B cell (primary cell): ENCODE measurements at regions of chr13 and their contacts with region 1.

Region 1: GRCh38 chr13:40629678-40630384 is 36.6 kb downstream of the FOXO1 start:
- DNase-seq: peak; percentile 68
- ATAC-seq: peak; percentile 73
- H3K4me3 ChIP-seq: peak overlapping the region in 2 of 5 experiments; percentile 6 to 37
- H3K4me3 Mint-ChIP-seq: peak overlapping the region; percentile 66
- H3K27ac ChIP-seq: peak overlapping the region; percentile 74 to 80
- H3K27ac Mint-ChIP-seq: peak overlapping the region; percentile 80
- H3K4me1 ChIP-seq: peaks cover 69 to 76% of the 10 kb centered on the region in 2 donors
- H3K4me1 Mint-ChIP-seq: peaks cover 80% of the 10 kb centered on the region
- H3K27me3 ChIP-seq: no peaks in the 10 kb centered on the region
- H3K27me3 Mint-ChIP-seq: no peaks in the 10 kb centered on the region
- CTCF ChIP-seq: no peak

Region 2: DNA sequence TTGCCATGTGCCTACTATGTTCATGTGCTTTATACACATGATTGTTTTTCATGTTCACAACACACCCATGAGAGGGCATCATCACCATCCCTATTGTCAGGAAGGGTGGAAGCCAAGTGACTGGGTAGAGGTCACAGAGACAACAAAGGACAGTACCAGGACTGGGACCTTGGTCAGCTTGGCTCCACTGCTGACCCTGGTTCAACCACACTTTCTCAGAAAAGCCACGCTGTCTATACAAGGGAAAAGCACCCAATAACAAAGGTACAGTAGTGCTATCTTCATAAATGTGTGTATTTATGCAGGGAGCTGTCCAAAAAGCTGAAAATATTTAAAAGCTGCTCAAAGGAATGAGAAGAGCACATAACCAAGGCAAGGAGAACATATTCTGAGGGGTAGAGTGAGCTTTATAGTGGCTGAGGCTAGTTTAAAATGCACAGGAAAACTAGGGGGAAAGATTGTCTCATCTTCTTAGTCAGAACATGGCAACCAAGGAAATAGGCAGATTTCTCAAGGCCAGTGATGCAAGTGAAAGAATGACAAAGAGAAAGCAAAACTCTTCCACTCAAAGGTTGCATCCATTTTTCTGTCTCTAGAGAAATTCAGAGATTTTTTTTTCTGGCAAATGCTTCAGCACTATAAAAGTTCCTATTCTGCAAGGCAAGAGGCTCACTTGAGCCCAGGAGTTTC is 378.3 kb before region 1 on chr13:
- CTCF ChIA-PET with region 1: no interaction called
- POLR2A ChIA-PET with region 1: no interaction called
- intact Hi-C with region 1: no loop called
- DNase-seq: peak; percentile 19
- ATAC-seq: peak; percentile 56
- H3K4me3 ChIP-seq: no peak overlapping the region
- H3K4me3 Mint-ChIP-seq: no peak overlapping the region
- H3K27ac ChIP-seq: no peak overlapping the region
- H3K27ac Mint-ChIP-seq: peak overlapping the region; percentile 3
- H3K4me1 ChIP-seq: peaks cover 8 to 13% of the 10 kb centered on the region in 2 donors
- H3K4me1 Mint-ChIP-seq: peaks cover 12% of the 10 kb centered on the region
- H3K27me3 ChIP-seq: no peaks in the 10 kb centered on the region
- H3K27me3 Mint-ChIP-seq: no peaks in the 10 kb centered on the region
- CTCF ChIP-seq: no peak

Region 3: DNA sequence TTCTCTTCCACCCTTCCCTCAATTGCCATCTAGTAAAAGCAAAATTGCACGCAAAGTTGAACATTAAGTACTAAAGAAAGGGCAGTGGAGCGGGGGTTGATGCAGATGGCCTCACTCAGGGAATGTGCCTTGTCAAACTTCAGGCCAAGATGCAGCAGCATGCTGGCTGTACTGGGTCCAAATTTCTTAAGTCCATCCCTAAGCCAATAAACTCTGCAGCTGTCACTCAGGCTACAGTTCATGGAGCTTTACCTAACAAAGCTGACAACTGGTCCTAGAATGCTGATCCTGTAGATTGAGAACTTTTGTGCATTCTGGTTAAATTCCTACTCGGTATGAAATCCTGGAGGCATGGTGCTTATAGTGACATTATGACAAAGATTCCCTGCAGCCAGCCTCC is 51.8 kb before region 1 on chr13:
- CTCF ChIA-PET with region 1: no interaction called
- POLR2A ChIA-PET with region 1: no interaction called
- intact Hi-C with region 1: no loop called
- DNase-seq: no peak
- ATAC-seq: no peak
- H3K4me3 ChIP-seq: no peak overlapping the region
- H3K4me3 Mint-ChIP-seq: peak overlapping the region; percentile 42
- H3K27ac ChIP-seq: peak overlapping the region; percentile 77 to 83
- H3K27ac Mint-ChIP-seq: peak overlapping the region; percentile 77
- H3K4me1 ChIP-seq: peaks cover 93 to 94% of the 10 kb centered on the region in 2 donors
- H3K4me1 Mint-ChIP-seq: peaks cover 94% of the 10 kb centered on the region
- H3K27me3 ChIP-seq: no peaks in the 10 kb centered on the region
- H3K27me3 Mint-ChIP-seq: no peaks in the 10 kb centered on the region
- CTCF ChIP-seq: no peak

Region 4: DNA sequence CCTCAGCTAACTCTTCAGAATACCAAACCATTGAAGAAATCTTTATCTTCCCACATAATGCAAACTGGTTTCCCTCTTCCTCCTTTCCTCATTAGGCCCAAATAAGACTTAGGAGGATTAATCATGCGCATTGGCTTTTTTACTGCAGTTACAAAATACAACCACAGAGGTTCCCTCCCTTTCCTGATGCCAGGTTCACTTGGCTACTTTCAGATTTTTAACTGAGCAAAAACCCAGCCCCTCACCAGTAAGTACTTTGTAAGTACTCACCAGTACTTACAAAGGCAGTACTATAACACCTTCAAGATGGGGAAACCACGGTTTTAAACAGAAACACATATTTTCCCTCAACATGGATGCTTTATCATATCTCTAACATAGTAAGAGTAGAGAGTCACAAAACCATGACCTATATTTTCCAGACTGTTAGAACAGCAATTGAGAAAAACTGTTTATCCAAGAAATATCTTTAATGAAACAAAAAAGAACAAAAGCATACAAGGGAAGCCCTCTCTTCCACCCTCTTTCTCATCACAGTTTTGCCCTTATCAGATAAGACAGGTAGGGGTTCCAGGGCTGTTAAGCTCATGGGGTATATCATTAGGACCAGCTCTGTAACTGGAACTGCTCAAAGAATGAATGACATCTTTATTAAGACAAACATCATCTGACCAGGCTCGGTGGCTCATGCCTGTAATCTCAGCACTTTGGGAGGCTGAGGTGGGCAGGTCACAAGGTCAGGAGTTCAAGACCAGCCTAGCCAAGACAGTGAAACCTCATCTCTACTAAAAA is 23.9 kb after region 1 on chr13:
- CTCF ChIA-PET with region 1: no interaction called
- POLR2A ChIA-PET with region 1: interaction called, 8 read pairs
- intact Hi-C with region 1: loop called (anchors 2 kb)
- DNase-seq: no peak
- ATAC-seq: peak; percentile 11
- H3K4me3 ChIP-seq: peak overlapping the region in 2 of 5 experiments; percentile 51 to 58
- H3K4me3 Mint-ChIP-seq: peak overlapping the region; percentile 86
- H3K27ac ChIP-seq: peak overlapping the region; percentile 62 to 73
- H3K27ac Mint-ChIP-seq: peak overlapping the region; percentile 90
- H3K4me1 ChIP-seq: peaks cover 79 to 87% of the 10 kb centered on the region in 2 donors
- H3K4me1 Mint-ChIP-seq: peaks cover 92% of the 10 kb centered on the region
- H3K27me3 ChIP-seq: no peaks in the 10 kb centered on the region
- H3K27me3 Mint-ChIP-seq: no peaks in the 10 kb centered on the region
- CTCF ChIP-seq: no peak